ENCODE measurements at regions of chr11 and their contacts with region 1.

Region 1: GRCh38 chr11:66069715-66070603 is at the start of gene PACS1:
- DNase-seq: no peak
- H3K4me3 ChIP-seq: peak within 1 kb of the TSS; percentile 81
- CTCF ChIP-seq: no peak

Region 2: DNA sequence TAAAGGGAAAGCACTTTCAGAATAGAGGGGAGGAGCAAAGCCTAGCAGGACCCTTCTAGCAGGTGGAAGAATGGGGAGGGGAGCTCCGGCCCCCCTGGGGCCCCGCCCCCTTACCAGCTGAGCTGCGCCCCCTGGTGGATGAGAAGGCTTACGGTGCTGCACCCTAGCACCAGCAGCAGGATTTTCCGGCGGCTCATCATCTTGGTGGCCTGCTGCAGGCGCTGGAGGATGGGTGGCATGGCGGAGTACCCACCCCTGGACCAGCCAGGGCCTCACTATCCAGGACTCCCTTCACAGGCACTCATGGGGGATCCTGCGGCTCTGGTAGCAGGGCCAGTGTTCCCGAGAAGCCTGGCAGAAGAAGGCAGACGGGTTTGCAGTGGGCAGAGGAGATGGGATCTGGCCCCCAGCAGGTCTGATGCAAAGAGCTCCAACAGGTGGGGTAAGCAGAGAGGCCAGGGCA is 24.8 kb before region 1 on chr11:
- CTCF ChIA-PET with region 1: interaction called, 345 read pairs
- POLR2A ChIA-PET with region 1: no interaction called
- DNase-seq: no peak
- H3K4me3 ChIP-seq: no peak overlapping the region
- CTCF ChIP-seq: peak; percentile 93

Region 3: DNA sequence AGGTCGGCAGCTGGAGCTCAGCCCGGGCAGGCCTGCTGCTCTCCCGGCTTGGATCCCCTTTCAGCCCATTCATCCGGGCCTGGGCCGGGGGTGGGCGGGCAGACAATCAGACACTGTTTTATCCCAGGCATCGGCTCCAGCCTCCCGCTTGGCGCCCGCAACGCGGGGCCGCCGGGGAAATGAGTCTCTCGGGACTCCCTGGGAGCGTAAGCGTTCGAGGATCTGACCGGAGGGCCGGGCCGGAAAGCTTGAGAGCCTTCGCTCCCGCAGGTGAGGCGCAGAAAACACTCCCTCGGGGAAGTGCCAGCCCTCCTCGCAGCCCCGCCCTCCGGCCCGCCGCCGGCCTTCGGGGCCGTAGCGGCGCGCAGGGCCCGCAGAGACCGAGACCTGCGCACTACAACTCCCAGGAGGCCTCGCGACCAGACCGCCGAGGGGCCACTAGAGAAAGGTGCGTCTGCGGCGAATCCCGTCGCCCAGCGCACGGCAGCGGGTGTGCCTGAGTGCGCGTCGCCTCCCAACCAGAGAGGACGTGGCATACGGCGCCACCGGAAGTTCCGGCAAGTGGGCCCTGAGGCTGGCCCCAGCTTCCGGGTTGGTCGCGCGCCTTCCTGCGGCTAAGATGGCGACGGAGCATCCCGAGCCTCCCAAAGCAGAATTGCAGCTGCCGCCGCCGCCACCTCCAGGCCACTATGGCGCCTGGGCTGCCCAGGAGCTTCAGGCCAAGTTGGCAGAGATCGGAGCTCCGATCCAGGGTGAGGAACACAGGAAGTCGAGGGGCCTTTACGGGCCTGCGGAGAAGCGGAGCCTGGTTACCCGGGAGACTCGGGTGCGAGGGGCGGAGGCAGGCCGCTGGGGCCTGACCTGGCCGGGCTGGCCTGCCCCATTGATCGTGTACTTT is 17.9 kb before region 1 on chr11 and contains the start of gene SF3B2:
- CTCF ChIA-PET with region 1: interaction called, 345 read pairs
- POLR2A ChIA-PET with region 1: interaction called, 4 read pairs
- DNase-seq: peak; percentile 84
- H3K4me3 ChIP-seq: peak within 1 kb of the TSS; percentile 95
- CTCF ChIP-seq: no peak

Region 4: GRCh38 chr11:66081505-66081904 is 11.5 kb after region 1 on chr11:
- CTCF ChIA-PET with region 1: interaction called, 75 read pairs
- POLR2A ChIA-PET with region 1: no interaction called
- DNase-seq: no peak
- H3K4me3 ChIP-seq: no peak overlapping the region
- CTCF ChIP-seq: no peak

Region 5: DNA sequence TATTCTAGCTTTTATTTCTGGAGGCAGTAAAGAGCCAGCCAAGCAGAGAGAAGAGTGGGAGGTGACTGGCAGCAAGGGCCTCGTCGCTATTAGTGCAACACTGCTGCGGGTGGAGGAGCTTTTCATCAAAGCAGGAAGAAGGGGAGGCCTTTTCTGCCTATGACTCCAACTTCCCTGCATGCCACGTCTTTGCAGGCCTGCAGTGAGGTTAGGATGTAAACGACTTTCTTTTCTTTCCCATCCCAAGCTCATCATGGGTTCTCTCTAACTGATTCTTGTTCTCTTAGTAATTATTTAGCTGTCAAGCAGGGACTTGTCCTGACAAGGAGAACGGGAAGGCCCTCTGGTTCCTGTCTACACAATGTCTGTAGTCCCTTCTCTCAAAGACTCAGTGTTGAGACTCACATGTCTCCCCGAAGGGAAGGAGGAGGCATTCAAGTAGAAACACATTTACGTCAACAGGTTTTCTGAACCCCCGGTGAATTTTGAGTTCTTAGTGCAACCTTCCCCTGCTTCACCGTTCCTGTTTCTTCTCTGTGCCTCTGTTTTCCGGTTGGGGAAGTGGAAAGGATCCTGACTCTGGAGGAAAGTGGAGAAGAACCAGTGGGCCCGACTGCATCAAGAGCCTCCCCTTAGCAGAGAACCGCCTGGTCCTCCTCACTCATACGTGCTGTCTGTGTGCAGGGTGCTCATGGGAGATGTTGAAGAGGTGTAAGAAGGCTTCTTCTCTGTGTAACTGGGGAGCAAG is 57.0 kb after region 1 on chr11:
- CTCF ChIA-PET with region 1: interaction called, 60 read pairs
- POLR2A ChIA-PET with region 1: interaction called, 3 read pairs
- DNase-seq: peak; percentile 41
- H3K4me3 ChIP-seq: no peak overlapping the region
- CTCF ChIP-seq: peak; percentile 5

Region 6: DNA sequence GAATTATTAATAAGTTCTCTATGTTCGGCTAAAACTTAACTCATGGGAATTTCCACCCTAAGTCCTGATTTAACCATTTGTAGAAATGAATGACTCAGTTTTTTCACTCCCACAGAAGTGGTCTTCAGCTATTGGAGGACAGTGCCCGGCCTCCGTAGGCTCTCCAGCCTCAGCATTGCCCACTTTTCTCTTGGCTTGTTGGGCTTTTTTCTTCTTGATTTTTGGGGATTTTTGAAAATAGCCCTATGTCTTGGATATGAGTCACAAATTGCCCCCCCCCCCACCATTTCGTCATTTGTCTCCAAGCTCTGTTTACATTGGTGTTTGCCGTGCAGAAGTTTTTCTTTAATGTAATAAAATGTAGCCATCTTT is 66.8 kb after region 1 on chr11:
- CTCF ChIA-PET with region 1: interaction called, 60 read pairs
- POLR2A ChIA-PET with region 1: no interaction called
- DNase-seq: no peak
- H3K4me3 ChIP-seq: no peak overlapping the region
- CTCF ChIP-seq: no peak

Region 7: GRCh38 chr11:66222358-66223149 is 152.6 kb after region 1 on chr11:
- CTCF ChIA-PET with region 1: interaction called, 28 read pairs
- POLR2A ChIA-PET with region 1: no interaction called
- DNase-seq: peak; percentile 49
- H3K4me3 ChIP-seq: no peak overlapping the region
- CTCF ChIP-seq: peak; percentile 100

Measured in AG04449 (cell line).